ENCODE measurements at regions of chr18 and their contacts with region 1.

Region 1: GRCh38 chr18:49768051-49768391 is 45.3 kb downstream of the ACAA2 start:
- DNase-seq: peak; percentile 84 to 88
- H3K4me3 ChIP-seq: no peak overlapping the region
- H3K27ac ChIP-seq: no peak overlapping the region
- H3K4me1 ChIP-seq: peaks cover 14 to 19% of the 10 kb centered on the region in 2 donors
- H3K27me3 ChIP-seq: no peaks in the 10 kb centered on the region
- CTCF ChIP-seq: peak; percentile 38 to 81 (median 77)
- POLR2A ChIP-seq: no peak

Region 2: DNA sequence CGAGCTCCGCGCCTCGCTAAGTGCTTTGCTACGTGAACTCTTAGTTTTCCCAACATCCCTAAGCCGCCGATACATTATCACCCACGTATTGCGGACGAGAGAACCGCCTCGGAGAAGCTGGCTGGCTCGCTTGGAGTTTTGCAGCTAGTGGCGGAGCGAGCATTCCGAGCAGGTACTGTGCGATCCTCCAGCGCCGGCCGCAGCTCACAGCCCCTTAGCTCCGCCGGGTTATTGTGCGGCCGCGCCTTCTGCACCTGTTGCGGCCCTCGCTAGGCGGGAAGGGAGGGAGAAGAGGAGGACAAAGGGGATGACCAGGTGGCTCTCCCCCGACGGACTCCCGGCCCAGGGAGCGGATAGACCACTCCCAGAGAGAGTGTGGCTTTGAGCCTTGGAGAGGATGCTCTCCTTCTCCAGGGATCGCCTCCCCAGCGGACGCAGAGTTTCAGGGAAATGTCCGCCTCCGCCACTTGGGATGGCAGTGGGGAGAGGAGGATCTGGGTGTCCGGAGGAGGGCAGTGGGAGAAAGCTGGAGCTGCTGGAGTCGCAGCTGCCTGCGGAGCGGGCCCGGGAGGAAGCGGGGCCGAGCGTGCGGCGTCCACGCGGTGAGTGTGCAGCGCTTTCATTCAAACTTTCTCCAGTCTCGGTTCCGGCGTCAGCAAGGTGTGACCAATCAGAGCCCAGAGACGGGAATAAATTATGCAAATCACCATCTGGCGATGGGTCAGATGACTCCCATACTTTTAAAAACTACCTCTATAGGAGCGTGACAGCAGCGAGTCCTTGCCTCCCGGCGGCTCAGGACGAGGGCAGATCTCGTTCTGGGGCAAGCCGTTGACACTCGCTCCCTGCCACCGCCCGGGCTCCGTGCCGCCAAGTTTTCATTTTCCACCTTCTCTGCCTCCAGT is 206.5 kb before region 1 on chr18 and contains the start of gene LIPG:
- intact Hi-C with region 1: loop called (anchors 5 kb)
- DNase-seq: peak; percentile 83 to 88
- H3K4me3 ChIP-seq: peak within 1 kb of the TSS; percentile 54 to 91 (median 77)
- H3K27ac ChIP-seq: peak within 1 kb of the TSS; percentile 34 to 63 (median 54)
- H3K4me1 ChIP-seq: peaks cover 14 to 28% of the 10 kb centered on the region in 2 donors
- H3K27me3 ChIP-seq: no peaks in the 10 kb centered on the region
- CTCF ChIP-seq: no peak
- POLR2A ChIP-seq: peak; percentile 65 to 97
- total RNA-seq, gene LIPG: 230 to 981 (median 515) TPM

Region 3: DNA sequence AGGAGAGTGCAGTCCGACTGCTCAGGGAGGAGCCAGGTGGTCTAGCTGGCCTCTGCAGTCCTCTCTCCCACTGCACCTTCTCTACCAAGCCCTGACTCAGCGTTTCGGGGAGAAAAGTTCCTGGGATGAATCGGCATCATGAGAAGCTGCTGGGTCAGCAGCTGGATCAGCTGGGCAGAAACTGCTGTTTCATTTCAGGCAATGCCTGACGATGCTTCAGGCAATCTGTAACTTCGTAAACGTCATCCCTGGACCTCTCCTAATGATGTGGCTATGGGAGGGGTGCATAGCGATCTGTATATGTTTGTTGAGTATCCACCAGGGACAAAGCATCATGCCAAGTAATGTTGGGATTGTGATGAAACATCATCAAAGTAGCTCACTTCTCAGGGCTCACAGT is 185.4 kb before region 1 on chr18:
- intact Hi-C with region 1: no loop called
- DNase-seq: peak in 1 of 2 donors; percentile 39
- H3K4me3 ChIP-seq: no peak overlapping the region
- H3K27ac ChIP-seq: peak overlapping the region in 1 of 3 donors; percentile 87
- H3K4me1 ChIP-seq: peaks cover 38 to 49% of the 10 kb centered on the region in 2 donors
- H3K27me3 ChIP-seq: no peaks in the 10 kb centered on the region
- CTCF ChIP-seq: no peak
- POLR2A ChIP-seq: no peak

Measured in thyroid gland (tissue), 4 donors.